ENCODE measurements at regions of chr3 and their contacts with region 1.

Region 1: DNA sequence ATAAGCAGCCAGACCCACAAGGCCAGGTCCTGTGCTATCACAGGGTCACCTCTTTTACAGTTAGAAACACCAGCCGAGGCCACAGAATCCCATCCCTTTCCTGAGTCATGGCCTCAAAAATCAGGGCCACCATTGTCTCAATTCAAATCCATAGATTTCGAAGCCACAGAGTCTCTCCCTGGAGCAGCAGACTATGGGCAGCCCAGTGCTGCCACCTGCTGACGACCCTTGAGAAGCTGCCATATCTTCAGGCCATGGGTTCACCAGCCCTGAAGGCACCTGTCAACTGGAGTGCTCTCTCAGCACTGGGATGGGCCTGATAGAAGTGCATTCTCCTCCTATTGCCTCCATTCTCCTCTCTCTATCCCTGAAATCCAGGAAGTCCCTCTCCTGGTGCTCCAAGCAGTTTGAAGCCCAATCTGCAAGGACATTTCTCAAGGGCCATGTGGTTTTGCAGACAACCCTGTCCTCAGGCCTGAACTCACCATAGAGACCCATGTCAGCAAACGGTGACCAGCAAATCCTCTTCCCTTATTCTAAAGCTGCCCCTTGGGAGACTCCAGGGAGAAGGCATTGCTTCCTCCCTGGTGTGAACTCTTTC is 39.6 kb downstream of the TGM4 start:
- DNase-seq: peak; percentile 79
- H3K4me3 ChIP-seq: no peak overlapping the region
- H3K27ac ChIP-seq: no peak overlapping the region
- H3K4me1 ChIP-seq: no peaks in the 10 kb centered on the region
- H3K27me3 ChIP-seq: no peaks in the 10 kb centered on the region; the same call in 1 of the 2 replicates

Region 2: DNA sequence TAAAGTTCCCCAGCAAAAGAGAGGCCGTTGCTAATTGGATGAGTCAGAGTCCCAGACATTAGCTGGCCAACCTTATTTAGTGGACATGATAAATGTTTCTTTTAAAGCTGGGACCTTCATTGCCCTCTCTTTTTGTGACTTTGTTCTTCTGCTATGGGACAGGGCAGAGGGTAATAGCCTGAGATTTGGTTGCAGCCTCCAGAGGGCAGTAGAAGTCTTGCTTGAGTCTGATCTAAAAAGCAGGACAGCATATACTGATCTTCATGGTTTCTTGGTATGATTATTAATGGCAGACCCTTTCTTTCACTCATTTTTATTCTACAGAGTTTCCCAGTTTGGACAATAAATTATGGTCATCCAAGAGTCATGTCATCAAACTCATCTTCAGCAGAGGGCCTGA is 384.0 kb before region 1 on chr3:
- in situ Hi-C with region 1: loop called (anchors 10 kb)
- DNase-seq: peak; percentile 41
- H3K4me3 ChIP-seq: no peak overlapping the region
- H3K27ac ChIP-seq: no peak overlapping the region
- H3K4me1 ChIP-seq: no peaks in the 10 kb centered on the region
- H3K27me3 ChIP-seq: peaks cover 9% of the 10 kb centered on the region

Measured in GM23248 (cell line).